Activated CD8-positive, alpha-beta memory T cell treated with anti-CD3 and anti-CD28 coated beads, Interleukin-2, amount 10 ng/mL, durations not matched to agents 7 days and 5 days (primary cell): ENCODE measurements at regions of chr12 and their contacts with region 1.

Region 1: DNA sequence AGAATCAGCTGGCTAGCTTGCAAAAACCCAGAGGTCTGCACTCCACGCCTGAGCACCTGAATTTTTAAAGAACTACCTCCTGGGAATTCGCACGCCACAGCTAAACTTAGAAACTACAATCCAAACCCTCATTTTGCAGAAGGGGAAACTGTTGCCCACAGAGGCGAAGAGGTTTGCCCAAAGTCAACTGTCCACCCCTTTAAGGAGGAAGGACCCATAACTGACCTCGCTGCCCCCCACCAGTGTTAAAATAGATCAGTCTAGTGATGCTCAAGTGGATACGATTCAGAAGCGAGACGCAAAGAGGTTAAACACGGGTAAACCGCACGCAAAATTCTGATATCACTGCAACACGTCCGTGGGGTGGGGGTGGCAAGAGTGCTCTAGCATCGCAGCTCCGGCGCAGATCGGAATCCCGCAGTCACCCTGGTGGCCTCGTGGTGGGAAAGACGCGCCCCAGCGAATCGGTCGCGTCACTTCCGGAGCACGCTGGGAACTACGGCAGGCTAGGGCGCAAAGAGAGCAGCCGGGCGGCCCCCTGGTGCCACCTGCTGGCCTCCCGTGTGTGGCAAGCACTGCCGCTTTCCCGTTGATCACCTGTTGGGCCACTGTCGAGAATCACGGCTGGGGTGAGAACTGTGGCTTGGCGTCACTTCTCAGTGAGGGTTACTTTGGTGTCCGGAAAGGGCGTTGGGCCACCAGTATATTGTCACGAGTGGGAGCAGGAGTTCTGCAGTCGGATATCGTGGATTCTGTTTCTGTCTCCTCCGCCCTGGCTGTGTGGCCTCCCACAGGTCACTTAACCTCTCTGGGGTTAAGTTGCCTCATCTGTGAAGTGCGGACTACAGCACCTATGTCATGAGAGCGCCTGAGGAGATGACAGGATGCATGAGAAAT is at the start of gene ALKBH2:
- DNase-seq: peak; percentile 95
- ATAC-seq: peak; percentile 73
- H3K4me3 Mint-ChIP-seq: peak within 1 kb of the TSS; percentile 78
- H3K27ac Mint-ChIP-seq: peak within 1 kb of the TSS; percentile 88
- H3K4me1 Mint-ChIP-seq: peaks cover 43% of the 10 kb centered on the region
- H3K27me3 Mint-ChIP-seq: no peaks in the 10 kb centered on the region
- total RNA-seq, gene ALKBH2: 14.0 to 17.2 TPM

Region 2: DNA sequence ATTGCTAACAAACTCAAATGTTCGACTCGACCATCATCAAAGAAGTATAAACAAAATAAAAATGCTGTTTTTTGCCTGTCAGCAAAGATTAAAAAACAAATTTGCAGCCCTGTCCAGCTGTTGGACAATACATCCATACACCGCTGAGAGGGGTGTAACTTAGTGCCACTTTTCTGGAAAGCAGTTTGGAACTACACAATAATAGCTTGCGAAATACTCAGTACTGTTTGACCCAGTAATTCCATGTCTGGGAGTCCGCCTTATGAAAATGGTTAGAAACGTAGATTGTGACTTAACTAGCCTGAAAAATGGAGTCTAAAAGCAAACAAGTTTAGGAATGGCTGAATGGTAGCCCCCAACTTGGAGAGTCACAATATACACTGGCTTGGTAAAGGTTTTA is 34.5 kb before region 1 on chr12:
- CTCF ChIA-PET with region 1: interaction called, 16 read pairs
- DNase-seq: no peak
- ATAC-seq: no peak
- H3K4me3 Mint-ChIP-seq: no peak overlapping the region
- H3K27ac Mint-ChIP-seq: no peak overlapping the region
- H3K4me1 Mint-ChIP-seq: peaks cover 9% of the 10 kb centered on the region
- H3K27me3 Mint-ChIP-seq: no peaks in the 10 kb centered on the region

Region 3: GRCh38 chr12:109069307-109070231 is 23.7 kb before region 1 on chr12:
- CTCF ChIA-PET with region 1: interaction called, 11 read pairs
- DNase-seq: no peak
- ATAC-seq: no peak
- H3K4me3 Mint-ChIP-seq: no peak overlapping the region
- H3K27ac Mint-ChIP-seq: no peak overlapping the region
- H3K4me1 Mint-ChIP-seq: no peaks in the 10 kb centered on the region
- H3K27me3 Mint-ChIP-seq: no peaks in the 10 kb centered on the region